ENCODE measurements at regions of chr3 and their contacts with region 1.

Region 1: GRCh38 chr3:108489771-108490170 is 20.6 kb downstream of the MYH15 start:
- DNase-seq: no peak
- ATAC-seq: peak in 3 of 4 donors; percentile 47 to 64 (median 54)
- H3K4me3 ChIP-seq: no peak overlapping the region
- H3K27ac ChIP-seq: no peak overlapping the region
- H3K4me1 ChIP-seq: peaks cover 0 to 22% (median 5%) of the 10 kb centered on the region in 12 donors
- H3K27me3 ChIP-seq: no peaks in the 10 kb centered on the region
- CTCF ChIP-seq: peak; percentile 58 to 83 (median 76)
- POLR2A ChIP-seq: no peak

Region 2: GRCh38 chr3:108546247-108546646 is 56.5 kb after region 1 on chr3:
- intact Hi-C with region 1: loop called in 2 of 10 experiments (anchors 2 kb)
- DNase-seq: no peak
- ATAC-seq: no peak
- H3K4me3 ChIP-seq: peak overlapping the region in 9 of 12 donors; percentile 17 to 45 (median 28)
- H3K27ac ChIP-seq: peak overlapping the region in 3 of 12 donors; percentile 9 to 52 (median 47)
- H3K4me1 ChIP-seq: peaks cover 0 to 15% (median 0%) of the 10 kb centered on the region in 12 donors
- H3K27me3 ChIP-seq: no peaks in the 10 kb centered on the region
- CTCF ChIP-seq: no peak
- POLR2A ChIP-seq: no peak

Region 3: DNA sequence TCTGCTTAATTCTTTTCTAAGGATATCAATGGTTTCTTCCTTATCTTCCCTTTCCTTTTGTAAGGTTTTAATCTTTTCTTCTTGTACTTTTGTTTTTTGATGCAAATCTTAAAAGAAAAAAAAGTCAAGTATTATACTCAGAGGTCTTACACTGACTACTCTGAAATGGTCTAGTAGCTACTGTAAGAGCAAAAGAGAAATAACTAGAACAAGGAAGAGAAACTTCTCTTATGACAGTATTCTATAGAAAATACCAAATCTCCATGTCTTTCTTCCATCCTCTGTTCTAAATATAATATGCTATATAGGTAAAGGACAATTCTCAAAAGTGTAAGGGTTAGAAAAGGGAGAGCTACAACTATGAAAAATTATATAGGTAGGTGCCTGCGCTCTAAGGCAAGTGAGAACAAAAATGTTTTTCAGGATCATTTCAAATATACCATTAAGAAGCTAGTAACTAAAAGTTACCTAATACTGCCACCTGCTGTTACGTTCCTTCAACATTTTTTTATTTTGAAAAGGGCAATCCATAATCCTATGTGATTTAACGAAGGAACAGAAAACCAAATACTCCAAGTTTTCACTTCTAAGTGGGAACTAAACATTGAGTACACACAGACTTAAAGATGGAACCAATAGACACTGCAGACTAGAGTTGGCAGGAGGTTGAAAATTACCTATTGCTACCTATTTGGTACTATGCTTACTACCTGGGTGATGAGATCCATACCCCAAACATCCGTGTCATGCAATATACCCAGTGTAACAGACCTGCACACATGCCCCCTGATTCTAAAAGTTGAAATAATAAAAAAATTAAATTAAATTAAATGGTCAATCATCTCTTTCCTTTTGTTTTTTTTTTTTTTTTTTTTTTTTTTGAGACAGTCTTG is 62.7 kb after region 1 on chr3:
- intact Hi-C with region 1: loop called (anchors 1 to 2 kb)
- DNase-seq: no peak
- ATAC-seq: peak; percentile 39 to 68 (median 46)
- H3K4me3 ChIP-seq: peak overlapping the region in 3 of 12 donors; percentile 8 to 22 (median 10)
- H3K27ac ChIP-seq: no peak overlapping the region
- H3K4me1 ChIP-seq: peaks cover 0 to 11% (median 0%) of the 10 kb centered on the region in 12 donors
- H3K27me3 ChIP-seq: no peaks in the 10 kb centered on the region
- CTCF ChIP-seq: peak; percentile 13 to 74 (median 59)
- POLR2A ChIP-seq: no peak

Region 4: DNA sequence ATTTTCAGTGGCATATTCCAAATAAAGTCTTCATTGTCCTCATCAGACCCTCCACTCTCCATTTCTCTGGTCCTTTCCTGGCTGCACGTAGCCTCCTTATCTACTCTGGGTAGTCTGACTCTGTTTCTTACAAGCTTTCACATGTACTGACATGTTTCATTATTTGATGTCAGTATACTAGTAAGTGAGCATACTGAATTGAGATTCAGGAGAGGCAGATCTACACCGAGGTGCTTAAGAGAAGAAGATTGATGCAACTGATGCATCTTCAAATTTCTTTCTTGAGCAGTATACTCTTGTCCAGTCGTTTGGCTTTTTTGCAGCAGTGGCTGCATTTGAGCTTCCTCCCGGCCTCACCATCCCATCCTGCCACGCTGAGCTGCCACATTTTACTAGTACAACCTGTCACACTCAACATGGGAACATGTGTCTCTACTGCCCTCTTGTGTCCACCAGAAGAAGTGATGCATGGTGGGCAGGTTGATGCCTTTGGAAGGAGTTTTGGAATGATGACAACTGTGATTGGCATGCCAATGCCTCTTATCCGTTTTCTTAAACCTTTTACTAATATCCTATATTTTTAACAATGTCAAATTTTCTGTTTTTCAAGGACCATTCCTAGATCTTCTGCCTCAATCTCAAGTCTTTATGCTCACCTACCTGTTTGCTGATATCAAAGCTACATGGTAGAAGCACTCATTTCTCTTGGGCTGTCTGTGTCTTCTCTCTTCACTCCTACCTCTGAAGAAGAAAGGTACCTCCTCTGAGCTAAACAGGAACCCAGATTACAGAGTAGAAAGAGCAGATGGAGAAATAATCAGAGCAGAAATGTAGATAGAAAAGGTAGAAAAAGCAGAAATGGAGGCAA is 425.2 kb after region 1 on chr3:
- intact Hi-C with region 1: loop called in 3 of 10 experiments (anchors 10 kb)
- DNase-seq: peak in 1 of 5 donors; percentile 10
- ATAC-seq: peak in 3 of 4 donors; percentile 37 to 75 (median 69)
- H3K4me3 ChIP-seq: no peak overlapping the region
- H3K27ac ChIP-seq: no peak overlapping the region
- H3K4me1 ChIP-seq: no peaks in the 10 kb centered on the region
- H3K27me3 ChIP-seq: no peaks in the 10 kb centered on the region
- CTCF ChIP-seq: peak; percentile 55 to 78 (median 70)
- POLR2A ChIP-seq: no peak